Gastrocnemius medialis (tissue), 4 donors: ENCODE measurements at regions of chr12 and their contacts with region 1.

Region 1: GRCh38 chr12:121579981-121580868 is 598 bp downstream of the KDM2B start:
- DNase-seq: peak; percentile 59 to 66
- ATAC-seq: peak; percentile 48 to 49
- H3K4me3 ChIP-seq: peak overlapping the region; percentile 76 to 83 (median 78)
- H3K27ac ChIP-seq: peak overlapping the region; percentile 91 to 96 (median 94)
- H3K4me1 ChIP-seq: peaks cover 23 to 24% of the 10 kb centered on the region in 2 donors
- H3K27me3 ChIP-seq: no peaks in the 10 kb centered on the region
- CTCF ChIP-seq: no peak
- POLR2A ChIP-seq: no peak

Region 2: DNA sequence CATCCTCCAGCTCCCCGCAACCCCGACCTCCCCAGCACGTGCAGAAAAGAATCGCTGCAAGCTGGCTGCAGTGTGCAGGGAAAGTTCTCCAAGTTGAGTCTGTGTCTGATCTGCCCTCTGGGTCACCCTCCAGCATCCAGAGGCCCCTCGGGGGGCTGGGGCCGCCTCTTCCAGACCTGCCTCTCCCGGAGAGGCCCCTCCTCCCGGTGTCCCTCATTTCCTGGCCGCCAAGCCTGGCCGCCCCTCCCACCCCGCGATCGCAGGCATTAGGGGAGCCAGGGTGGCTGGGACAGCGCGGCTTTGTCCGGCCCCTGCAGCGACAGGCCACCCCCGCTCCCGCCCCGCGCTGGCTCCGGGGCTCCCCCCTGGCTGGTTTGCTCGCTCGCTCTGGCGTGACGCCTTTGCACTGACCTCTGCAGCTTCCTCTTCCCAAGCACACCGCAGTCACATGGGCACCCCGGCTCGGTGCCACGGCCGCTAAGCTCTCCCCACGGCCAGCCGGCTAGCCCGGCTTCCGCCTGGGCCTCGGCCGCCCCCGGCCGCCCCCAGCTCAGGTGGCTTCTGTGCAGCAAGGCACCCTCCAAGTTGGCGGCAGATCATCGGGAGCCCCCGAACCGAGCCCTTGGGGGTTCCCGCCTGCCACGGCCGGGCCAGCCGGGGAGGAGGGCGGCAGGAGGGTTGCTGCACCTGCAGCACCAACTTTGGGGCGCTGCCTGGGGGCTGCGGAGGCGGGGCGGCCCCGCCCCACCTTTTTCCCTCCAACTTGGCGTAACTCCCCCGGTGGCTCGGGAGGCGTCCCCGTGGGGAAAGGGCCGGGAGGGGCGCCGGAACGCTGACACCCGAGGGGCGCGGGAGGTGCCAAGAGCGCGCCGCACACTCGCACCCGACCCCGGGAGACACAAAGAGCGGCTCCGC is 43.1 kb before region 1 on chr12:
- in situ Hi-C with region 1: no loop called
- intact Hi-C with region 1: loop called (anchors 5 kb)
- DNase-seq: peak; percentile 81 to 91
- ATAC-seq: peak; percentile 81
- H3K4me3 ChIP-seq: peak overlapping the region; percentile 68 to 87 (median 82)
- H3K27ac ChIP-seq: peak overlapping the region; percentile 91 to 97 (median 94)
- H3K4me1 ChIP-seq: peaks cover 22 to 23% of the 10 kb centered on the region in 2 donors
- H3K27me3 ChIP-seq: no peaks in the 10 kb centered on the region
- CTCF ChIP-seq: no peak
- POLR2A ChIP-seq: peak; percentile 59 to 75

Region 3: DNA sequence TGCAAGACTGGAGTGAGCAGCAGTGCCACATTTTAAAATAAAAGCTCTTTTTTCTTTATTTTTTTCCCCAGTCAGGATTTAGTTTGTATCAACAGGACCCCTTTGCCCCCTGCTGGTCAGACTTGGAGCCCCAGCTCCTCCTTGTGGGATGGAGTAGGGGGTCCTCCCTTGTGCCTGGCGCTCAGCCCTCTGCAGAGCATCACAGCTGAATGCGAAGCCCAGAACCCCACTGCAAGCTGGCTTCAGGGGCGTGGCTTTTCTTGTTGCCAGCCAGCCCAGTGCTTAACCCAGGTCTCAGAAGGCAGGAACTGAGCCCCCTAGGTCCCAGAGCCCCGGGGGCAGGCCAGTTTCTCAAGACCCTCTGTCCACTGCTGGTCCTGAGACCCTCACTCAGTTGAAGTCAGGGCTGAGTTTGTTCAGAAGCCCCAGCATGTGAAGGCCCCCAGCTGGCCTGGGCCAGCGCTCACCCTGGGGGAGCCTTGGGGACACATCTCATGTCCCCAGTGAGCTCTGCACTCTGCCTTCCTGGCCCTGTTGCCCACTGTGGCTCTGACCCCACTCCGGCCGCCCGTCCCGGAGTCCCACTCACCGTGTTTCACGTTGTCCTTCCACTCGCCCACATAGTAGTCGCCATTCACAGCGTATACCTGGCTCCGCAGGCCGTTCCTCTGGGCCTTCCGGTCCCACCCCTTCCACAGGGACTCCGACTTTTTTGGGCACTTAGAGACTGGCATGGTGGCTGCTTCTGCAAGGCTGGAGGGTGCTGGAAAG is 88.7 kb after region 1 on chr12:
- in situ Hi-C with region 1: no loop called
- intact Hi-C with region 1: no loop called
- DNase-seq: no peak
- ATAC-seq: no peak
- H3K4me3 ChIP-seq: no peak overlapping the region
- H3K27ac ChIP-seq: no peak overlapping the region
- H3K4me1 ChIP-seq: peaks cover 0 to 6% of the 10 kb centered on the region in 2 donors
- H3K27me3 ChIP-seq: peaks cover 0 to 7% (median 0%) of the 10 kb centered on the region in 3 donors
- CTCF ChIP-seq: peak; percentile 25 to 66 (median 63)
- POLR2A ChIP-seq: no peak